ENCODE measurements at regions of chr7 and their contacts with region 1.

Region 1: DNA sequence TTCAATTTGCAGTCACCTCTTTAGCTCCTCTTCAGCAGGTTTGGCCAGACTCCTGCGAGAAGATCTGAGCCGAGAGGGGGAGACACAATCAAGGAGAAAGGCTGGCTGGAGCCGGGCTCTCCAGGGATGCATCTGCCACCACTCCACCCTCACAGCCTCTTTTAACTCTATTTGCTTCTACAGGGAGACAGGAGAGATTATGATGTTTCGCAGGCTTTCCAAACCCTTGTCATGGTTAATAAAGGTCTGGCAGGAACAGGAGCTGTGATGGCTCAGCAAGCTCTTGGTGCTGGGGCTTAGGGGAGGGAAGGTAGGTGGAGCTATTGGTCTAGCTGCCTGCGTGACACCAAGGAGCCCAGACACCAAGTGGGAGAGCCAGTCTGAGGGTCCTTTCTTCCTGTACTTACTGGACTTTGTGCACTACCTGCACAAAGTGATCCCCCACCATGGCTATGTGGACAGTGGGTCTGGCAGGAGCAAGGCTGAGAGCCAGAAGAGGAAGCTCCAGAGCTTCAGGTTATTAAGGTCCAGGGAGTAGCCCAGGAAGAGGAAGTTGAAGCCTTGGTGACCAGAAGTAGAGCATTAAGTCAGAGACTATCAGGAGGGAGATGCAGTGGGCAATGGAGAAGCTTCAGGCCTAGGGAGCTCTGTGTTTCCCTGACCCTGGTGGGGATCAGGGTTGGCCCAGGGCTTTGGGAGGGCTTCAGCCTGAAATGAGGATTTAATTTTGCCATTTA is 448.3 kb upstream of the PODXL start:
- DNase-seq: peak in 1 of 2 donors; percentile 18
- ATAC-seq: peak; percentile 44 to 92 (median 88)
- H3K4me3 ChIP-seq: no peak overlapping the region
- H3K27ac ChIP-seq: no peak overlapping the region
- H3K4me1 ChIP-seq: no peaks in the 10 kb centered on the region
- H3K27me3 ChIP-seq: no peaks in the 10 kb centered on the region
- CTCF ChIP-seq: peak; percentile 41

Region 2: GRCh38 chr7:132154248-132154647 is 149.5 kb after region 1 on chr7:
- intact Hi-C with region 1: loop called (anchors 2 to 5 kb)
- DNase-seq: no peak
- ATAC-seq: peak in 1 of 4 donors; percentile 66
- H3K4me3 ChIP-seq: no peak overlapping the region
- H3K27ac ChIP-seq: no peak overlapping the region
- H3K4me1 ChIP-seq: no peaks in the 10 kb centered on the region
- H3K27me3 ChIP-seq: no peaks in the 10 kb centered on the region
- CTCF ChIP-seq: peak; percentile 15